ENCODE measurements at regions of chr9 and their contacts with region 1.

Region 1: DNA sequence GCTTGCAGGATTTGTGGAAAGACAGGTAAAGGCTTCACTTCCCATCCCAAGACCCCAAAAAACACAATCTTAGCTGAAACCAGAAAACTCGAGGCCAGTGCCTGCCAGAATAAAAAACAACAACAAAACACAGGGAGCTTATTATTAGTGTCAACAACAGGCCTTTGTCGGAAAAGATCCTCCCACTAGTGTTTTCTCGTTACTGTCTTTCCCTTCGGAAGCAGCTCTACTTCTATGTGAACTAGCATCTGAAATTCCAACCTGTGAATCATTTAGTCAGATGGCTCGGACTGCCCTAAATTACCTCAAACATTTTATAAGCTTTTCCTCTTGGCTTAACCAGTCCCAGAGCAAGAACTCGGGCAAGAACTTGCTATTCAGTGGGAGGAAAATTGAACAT is 122.2 kb upstream of the GNA14 start:
- DNase-seq: no peak
- H3K4me3 ChIP-seq: no peak overlapping the region
- H3K27ac ChIP-seq: no peak overlapping the region
- H3K4me1 ChIP-seq: no peaks in the 10 kb centered on the region
- H3K27me3 ChIP-seq: no peaks in the 10 kb centered on the region
- CTCF ChIP-seq: no peak
- POLR2A ChIP-seq: no peak

Region 2: GRCh38 chr9:77651203-77651602 is 119.1 kb before region 1 on chr9:
- intact Hi-C with region 1: loop called (anchors 10 kb)
- DNase-seq: no peak
- H3K4me3 ChIP-seq: no peak overlapping the region
- H3K27ac ChIP-seq: no peak overlapping the region
- H3K4me1 ChIP-seq: no peaks in the 10 kb centered on the region
- H3K27me3 ChIP-seq: no peaks in the 10 kb centered on the region
- CTCF ChIP-seq: no peak
- POLR2A ChIP-seq: no peak

Region 3: GRCh38 chr9:78644359-78644758 is 874.0 kb after region 1 on chr9:
- intact Hi-C with region 1: no loop called
- DNase-seq: no peak
- H3K4me3 ChIP-seq: no peak overlapping the region
- H3K27ac ChIP-seq: no peak overlapping the region
- H3K4me1 ChIP-seq: no peaks in the 10 kb centered on the region
- H3K27me3 ChIP-seq: no peaks in the 10 kb centered on the region
- CTCF ChIP-seq: no peak
- POLR2A ChIP-seq: no peak